Heart right ventricle (tissue), 16 donors: ENCODE measurements at regions of chrX and their contacts with region 1.

Region 1: DNA sequence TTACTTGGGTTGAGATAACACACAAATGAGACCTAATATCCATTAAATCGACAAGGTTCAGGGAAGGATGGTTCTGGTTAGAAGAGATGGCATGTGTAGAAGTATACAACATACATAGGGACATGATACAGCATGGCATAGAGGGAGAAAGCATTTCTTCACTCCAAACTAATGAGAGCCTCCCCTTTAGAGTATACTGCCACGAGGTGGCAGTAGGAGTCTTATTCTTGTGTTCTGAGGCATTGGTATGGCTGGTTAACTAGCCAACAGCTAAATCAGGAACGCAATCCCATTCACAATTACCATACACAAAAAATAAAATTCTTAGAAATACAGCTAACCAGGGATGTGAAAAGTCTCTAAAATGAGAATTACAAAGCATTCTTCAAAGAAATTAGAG is 29.1 kb upstream of the TRO start:
- DNase-seq: peak in 1 of 2 donors; percentile 13
- ATAC-seq: peak in 1 of 8 donors; percentile 52
- H3K4me3 ChIP-seq: no peak overlapping the region
- H3K27ac ChIP-seq: no peak overlapping the region
- H3K4me1 ChIP-seq: no peaks in the 10 kb centered on the region
- H3K27me3 ChIP-seq: peaks cover 0 to 6% (median 0%) of the 10 kb centered on the region in 7 donors
- CTCF ChIP-seq: peak; percentile 8 to 61 (median 54)

Region 2: DNA sequence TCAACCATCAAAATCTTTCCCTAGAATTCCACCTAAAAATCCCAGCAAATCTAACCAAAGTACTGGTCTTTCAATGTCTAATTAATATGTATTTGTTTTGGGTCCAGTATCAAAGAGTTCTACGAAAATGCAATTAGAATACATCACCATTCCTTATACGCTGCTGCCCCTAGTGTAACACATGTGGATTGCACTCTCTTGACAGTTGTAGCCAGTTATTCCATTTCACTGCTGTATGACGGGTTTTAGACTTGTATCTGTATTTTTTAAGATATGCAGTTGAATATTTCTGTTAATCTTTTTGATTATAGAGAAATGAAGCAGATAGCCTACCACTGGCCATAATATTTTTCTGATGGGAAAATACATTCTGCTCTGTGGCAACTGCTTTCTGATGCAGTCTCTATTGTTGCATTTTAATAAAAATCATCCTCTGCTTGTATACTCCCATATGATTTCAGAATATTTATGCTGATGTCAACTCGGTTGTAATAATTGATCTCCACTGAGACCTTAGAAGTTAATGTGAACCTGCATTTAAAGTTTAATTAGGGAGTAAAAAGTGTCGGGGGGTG is 166.2 kb after region 1 on chrX:
- intact Hi-C with region 1: loop called in 8 of 10 experiments (anchors 5 to 10 kb)
- DNase-seq: peak in 1 of 2 donors; percentile 7
- ATAC-seq: peak in 7 of 8 donors; percentile 51 to 79 (median 69)
- H3K4me3 ChIP-seq: peak overlapping the region in 5 of 10 donors; percentile 21 to 33 (median 31)
- H3K27ac ChIP-seq: no peak overlapping the region
- H3K4me1 ChIP-seq: peaks cover 0 to 5% (median 0%) of the 10 kb centered on the region in 9 donors
- H3K27me3 ChIP-seq: peaks cover 0 to 52% (median 0%) of the 10 kb centered on the region in 7 donors
- CTCF ChIP-seq: peak; percentile 50 to 80 (median 75)

Region 3: GRCh38 chrX:55342533-55343501 is 451.2 kb after region 1 on chrX:
- intact Hi-C with region 1: loop called in 1 of 10 experiments (anchors 10 kb)
- DNase-seq: peak; percentile 5 to 7
- ATAC-seq: peak; percentile 43 to 84 (median 61)
- H3K4me3 ChIP-seq: peak overlapping the region in 1 of 10 donors; percentile 20
- H3K27ac ChIP-seq: peak overlapping the region in 5 of 10 donors; percentile 19 to 66 (median 41)
- H3K4me1 ChIP-seq: peaks cover 0 to 3% (median 0%) of the 10 kb centered on the region in 9 donors
- H3K27me3 ChIP-seq: peaks cover 0 to 14% (median 0%) of the 10 kb centered on the region in 7 donors
- CTCF ChIP-seq: peak in 7 of 9 donors; percentile 51 to 66 (median 54)